ENCODE measurements at regions of chr14 and their contacts with region 1.

Region 1: DNA sequence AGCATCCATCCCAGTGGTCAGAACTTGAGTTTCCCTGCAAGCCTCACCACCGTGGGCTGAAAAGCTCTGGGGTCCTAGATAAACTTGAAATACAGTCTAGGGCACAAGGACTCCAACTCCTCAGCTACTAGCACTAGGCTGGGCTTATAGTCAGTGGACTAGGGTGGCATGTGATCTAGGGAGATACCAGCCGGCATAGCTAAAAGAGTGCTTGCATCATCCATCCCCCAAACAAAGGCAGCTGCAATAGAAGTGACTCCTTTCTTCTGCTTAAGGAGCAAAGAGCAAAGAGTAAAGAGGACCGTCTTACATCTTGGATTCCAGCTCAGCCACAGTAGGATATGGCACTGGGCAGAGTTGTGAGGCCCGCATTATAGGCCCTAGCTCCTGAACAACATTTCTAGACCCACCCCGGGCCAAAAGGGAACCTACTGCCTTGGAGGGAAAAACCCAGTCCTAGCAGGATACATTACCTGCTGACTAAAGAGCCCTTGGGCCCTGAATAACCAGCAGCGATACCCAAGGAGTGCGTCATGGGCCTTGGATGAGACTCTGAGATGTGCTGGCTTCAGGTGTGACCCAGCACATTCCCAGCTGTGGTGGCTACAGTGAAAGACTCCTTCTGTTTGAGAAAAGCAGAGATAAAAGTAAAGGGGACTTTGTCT is 17.9 kb upstream of the SOS2 start:
- DNase-seq: no peak
- ATAC-seq: no peak
- H3K4me3 ChIP-seq: no peak overlapping the region
- H3K27ac ChIP-seq: no peak overlapping the region
- H3K4me1 ChIP-seq: no peaks in the 10 kb centered on the region
- CTCF ChIP-seq: no peak
- EP300 ChIP-seq: no peak
- POLR2A ChIP-seq: no peak
- RAD21 ChIP-seq: no peak

Region 2: GRCh38 chr14:50260511-50260910 is 11.2 kb after region 1 on chr14:
- CTCF ChIA-PET with region 1: interaction called, 10 read pairs
- POLR2A ChIA-PET with region 1: no interaction called
- DNase-seq: peak in 1 of 2 experiments; percentile 40
- ATAC-seq: peak; percentile 73 to 82; a peak in 5 of 6 replicates
- H3K4me3 ChIP-seq: no peak overlapping the region
- H3K27ac ChIP-seq: no peak overlapping the region
- H3K4me1 ChIP-seq: no peaks in the 10 kb centered on the region
- CTCF ChIP-seq: peak; percentile 41
- EP300 ChIP-seq: no peak
- POLR2A ChIP-seq: no peak
- RAD21 ChIP-seq: peak; percentile 44 to 57; a peak in 4 of 5 replicates